ENCODE measurements at regions of chr2 and their contacts with region 1.

Region 1: GRCh38 chr2:213232649-213233437 is 51.4 kb upstream of the SPAG16 start:
- DNase-seq: peak; percentile 84
- ATAC-seq: peak; percentile 94
- H3K4me3 ChIP-seq: peak overlapping the region in 3 of 5 experiments; percentile 5 to 30 (median 21)
- H3K4me3 Mint-ChIP-seq: peak overlapping the region; percentile 71
- H3K27ac ChIP-seq: peak overlapping the region; percentile 64 to 75
- H3K27ac Mint-ChIP-seq: peak overlapping the region; percentile 73
- H3K4me1 ChIP-seq: peaks cover 34 to 60% of the 10 kb centered on the region in 2 donors
- H3K4me1 Mint-ChIP-seq: peaks cover 66% of the 10 kb centered on the region
- H3K27me3 ChIP-seq: no peaks in the 10 kb centered on the region
- H3K27me3 Mint-ChIP-seq: peaks cover 7% of the 10 kb centered on the region
- CTCF ChIP-seq: no peak

Region 2: DNA sequence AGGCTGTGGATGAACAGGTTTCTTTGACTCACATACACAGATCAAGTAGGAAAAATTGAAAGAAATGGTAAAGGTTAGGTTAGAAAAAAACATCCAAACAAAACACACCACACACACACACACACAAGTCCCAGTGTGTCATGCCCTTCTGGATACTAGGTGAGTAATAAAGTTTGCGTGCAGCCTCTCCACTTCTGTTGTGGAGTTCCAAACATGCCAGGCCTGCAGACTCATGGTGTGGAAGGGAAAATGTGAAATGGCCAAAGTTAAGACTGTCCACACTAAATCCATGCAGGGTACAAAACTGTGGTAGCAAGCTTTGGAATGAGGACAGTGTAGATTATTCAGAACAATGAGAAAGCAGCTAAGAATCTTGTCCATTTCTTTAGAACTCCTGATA is 196.0 kb before region 1 on chr2:
- CTCF ChIA-PET with region 1: no interaction called
- POLR2A ChIA-PET with region 1: no interaction called
- intact Hi-C with region 1: loop called (anchors 2 kb)
- DNase-seq: no peak
- ATAC-seq: no peak
- H3K4me3 ChIP-seq: no peak overlapping the region
- H3K4me3 Mint-ChIP-seq: no peak overlapping the region
- H3K27ac ChIP-seq: peak overlapping the region; percentile 7 to 58
- H3K27ac Mint-ChIP-seq: no peak overlapping the region
- H3K4me1 ChIP-seq: peaks cover 35 to 40% of the 10 kb centered on the region in 2 donors
- H3K4me1 Mint-ChIP-seq: peaks cover 51% of the 10 kb centered on the region
- H3K27me3 ChIP-seq: no peaks in the 10 kb centered on the region
- H3K27me3 Mint-ChIP-seq: no peaks in the 10 kb centered on the region
- CTCF ChIP-seq: no peak

Region 3: GRCh38 chr2:213157242-213157641 is 75.6 kb before region 1 on chr2:
- CTCF ChIA-PET with region 1: interaction called, 12 read pairs
- POLR2A ChIA-PET with region 1: interaction called, 6 read pairs
- intact Hi-C with region 1: loop called (anchors 1 kb)
- DNase-seq: peak; percentile 84
- ATAC-seq: peak; percentile 89
- H3K4me3 ChIP-seq: no peak overlapping the region
- H3K4me3 Mint-ChIP-seq: peak overlapping the region; percentile 23
- H3K27ac ChIP-seq: peak overlapping the region; percentile 53 to 79
- H3K27ac Mint-ChIP-seq: peak overlapping the region; percentile 66
- H3K4me1 ChIP-seq: peaks cover 11 to 27% of the 10 kb centered on the region in 2 donors
- H3K4me1 Mint-ChIP-seq: peaks cover 44% of the 10 kb centered on the region
- H3K27me3 ChIP-seq: no peaks in the 10 kb centered on the region
- H3K27me3 Mint-ChIP-seq: no peaks in the 10 kb centered on the region
- CTCF ChIP-seq: no peak

Region 4: GRCh38 chr2:213251618-213252017 is 18.8 kb after region 1 on chr2:
- CTCF ChIA-PET with region 1: interaction called, 4 read pairs
- POLR2A ChIA-PET with region 1: no interaction called
- intact Hi-C with region 1: loop called (anchors 2 kb)
- DNase-seq: peak; percentile 71
- ATAC-seq: peak; percentile 72
- H3K4me3 ChIP-seq: no peak overlapping the region
- H3K4me3 Mint-ChIP-seq: no peak overlapping the region
- H3K27ac ChIP-seq: no peak overlapping the region
- H3K27ac Mint-ChIP-seq: no peak overlapping the region
- H3K4me1 ChIP-seq: no peaks in the 10 kb centered on the region
- H3K4me1 Mint-ChIP-seq: no peaks in the 10 kb centered on the region
- H3K27me3 ChIP-seq: no peaks in the 10 kb centered on the region
- H3K27me3 Mint-ChIP-seq: peaks cover 9% of the 10 kb centered on the region
- CTCF ChIP-seq: peak; percentile 92

Region 5: GRCh38 chr2:213500881-213501280 is 268.0 kb after region 1 on chr2:
- CTCF ChIA-PET with region 1: no interaction called
- POLR2A ChIA-PET with region 1: no interaction called
- intact Hi-C with region 1: no loop called
- DNase-seq: no peak
- ATAC-seq: no peak
- H3K4me3 ChIP-seq: no peak overlapping the region
- H3K4me3 Mint-ChIP-seq: no peak overlapping the region
- H3K27ac ChIP-seq: no peak overlapping the region
- H3K27ac Mint-ChIP-seq: no peak overlapping the region
- H3K4me1 ChIP-seq: no peaks in the 10 kb centered on the region
- H3K4me1 Mint-ChIP-seq: no peaks in the 10 kb centered on the region
- H3K27me3 ChIP-seq: no peaks in the 10 kb centered on the region
- H3K27me3 Mint-ChIP-seq: no peaks in the 10 kb centered on the region
- CTCF ChIP-seq: no peak

Region 6: DNA sequence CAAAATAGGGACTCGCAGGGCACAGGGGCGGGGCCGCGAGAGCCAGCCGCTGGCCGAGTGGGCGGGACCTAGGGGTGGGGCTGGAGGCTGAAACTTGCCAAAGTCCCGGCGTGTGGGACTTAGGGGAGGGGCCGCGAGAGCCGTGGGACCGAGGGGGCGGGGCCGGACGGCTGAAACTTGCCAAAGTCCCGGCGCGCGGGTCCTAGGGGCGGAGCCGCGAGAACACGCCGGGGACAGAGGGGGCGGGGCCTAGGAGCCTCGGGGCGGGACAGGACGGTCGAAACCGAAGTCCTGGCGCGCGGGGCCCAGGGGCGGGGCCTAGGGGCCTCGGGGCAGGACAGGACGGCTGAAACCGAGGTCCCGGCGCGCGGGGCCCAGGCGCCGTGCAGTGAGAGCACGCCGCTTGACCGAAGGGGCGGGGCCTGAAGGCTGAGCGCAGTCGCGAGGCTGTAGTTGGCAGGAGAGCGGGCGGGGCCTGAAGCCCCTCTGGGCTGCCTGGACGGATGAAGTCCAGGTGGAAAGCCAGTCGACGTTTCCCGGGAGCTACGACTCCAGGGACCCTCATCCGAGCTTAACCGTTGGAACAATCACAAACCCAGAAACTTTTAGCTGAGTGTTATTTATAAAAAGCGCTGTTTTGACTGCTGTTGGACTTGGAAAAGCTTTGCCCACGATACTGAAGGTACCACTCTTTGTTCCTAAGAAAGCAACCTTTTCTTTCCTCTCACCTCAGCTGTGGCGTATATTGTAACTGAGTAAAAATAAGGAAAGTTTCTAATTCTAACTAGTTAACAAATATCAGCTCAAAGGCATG is 1577.1 kb after region 1 on chr2:
- CTCF ChIA-PET with region 1: no interaction called
- POLR2A ChIA-PET with region 1: no interaction called
- intact Hi-C with region 1: loop called (anchors 2 kb)
- DNase-seq: peak; percentile 99
- ATAC-seq: peak; percentile 88
- H3K4me3 ChIP-seq: peak overlapping the region; percentile 53 to 96 (median 94)
- H3K4me3 Mint-ChIP-seq: peak overlapping the region; percentile 98
- H3K27ac ChIP-seq: peak overlapping the region; percentile 75 to 76
- H3K27ac Mint-ChIP-seq: peak overlapping the region; percentile 98
- H3K4me1 ChIP-seq: peaks cover 13 to 19% of the 10 kb centered on the region in 2 donors
- H3K4me1 Mint-ChIP-seq: peaks cover 40% of the 10 kb centered on the region
- H3K27me3 ChIP-seq: no peaks in the 10 kb centered on the region
- H3K27me3 Mint-ChIP-seq: no peaks in the 10 kb centered on the region
- CTCF ChIP-seq: no peak

Measured in B cell (primary cell).